Endothelial cell of umbilical vein (primary cell): ENCODE measurements at regions of chr15 and their contacts with region 1.

Region 1: GRCh38 chr15:94700211-94700610 is 468.9 kb downstream of the MCTP2 start:
- DNase-seq: no peak
- H3K4me3 ChIP-seq: no peak overlapping the region
- H3K27ac ChIP-seq: no peak overlapping the region
- H3K4me1 ChIP-seq: peaks cover 44% of the 10 kb centered on the region
- H3K27me3 ChIP-seq: no peaks in the 10 kb centered on the region
- CTCF ChIP-seq: no peak
- POLR2A ChIP-seq: no peak

Region 2: DNA sequence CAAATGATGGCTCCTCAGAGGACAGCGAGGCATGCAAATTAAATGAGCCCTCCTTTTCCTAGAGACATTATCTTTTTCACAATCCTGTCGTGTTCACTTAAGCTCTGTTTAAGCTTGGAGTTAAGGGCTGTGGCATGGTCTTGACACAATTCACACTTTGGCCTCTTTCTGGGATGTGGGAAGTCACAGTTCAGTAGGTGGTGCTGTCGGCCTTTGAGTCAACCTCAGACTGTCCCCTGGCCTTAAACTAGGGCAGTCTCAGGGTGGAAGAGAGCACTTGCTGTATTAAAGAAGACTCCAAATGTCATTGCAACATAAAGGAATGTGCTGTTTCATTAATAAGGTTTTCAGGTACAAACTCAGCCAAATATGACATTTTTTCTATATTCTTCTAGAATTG is 117.8 kb before region 1 on chr15:
- CTCF ChIA-PET with region 1: no interaction called
- POLR2A ChIA-PET with region 1: no interaction called
- dilution Hi-C with region 1: no loop called
- intact Hi-C with region 1: loop called (anchors 1 kb)
- DNase-seq: peak; percentile 85
- H3K4me3 ChIP-seq: no peak overlapping the region
- H3K27ac ChIP-seq: no peak overlapping the region
- H3K4me1 ChIP-seq: peaks cover 25% of the 10 kb centered on the region
- H3K27me3 ChIP-seq: no peaks in the 10 kb centered on the region
- CTCF ChIP-seq: peak; percentile 75 to 80
- POLR2A ChIP-seq: no peak

Region 3: DNA sequence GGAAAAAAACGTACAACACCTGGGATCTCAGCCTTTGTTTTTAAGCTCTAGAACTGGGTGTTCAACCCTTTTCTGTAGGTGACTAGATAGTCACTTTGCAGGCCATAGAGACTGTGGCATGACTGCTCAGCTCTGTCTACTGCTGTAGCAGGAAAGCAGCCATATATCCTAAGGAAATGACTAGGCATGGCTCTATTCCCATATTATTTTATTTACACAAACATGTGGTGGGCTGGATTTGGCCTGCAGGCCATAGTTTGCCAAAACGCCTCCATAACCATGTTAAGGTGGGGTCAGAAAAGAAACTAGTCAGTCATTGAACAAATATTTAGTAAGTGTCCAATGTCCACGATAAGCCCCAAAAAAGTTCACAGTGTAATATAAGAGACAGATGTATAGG is 16.3 kb before region 1 on chr15:
- CTCF ChIA-PET with region 1: interaction called, 6 read pairs
- POLR2A ChIA-PET with region 1: no interaction called
- dilution Hi-C with region 1: no loop called
- intact Hi-C with region 1: loop called (anchors 1 kb)
- DNase-seq: peak; percentile 74
- H3K4me3 ChIP-seq: no peak overlapping the region
- H3K27ac ChIP-seq: peak overlapping the region; percentile 76
- H3K4me1 ChIP-seq: peaks cover 29% of the 10 kb centered on the region
- H3K27me3 ChIP-seq: no peaks in the 10 kb centered on the region
- CTCF ChIP-seq: no peak
- POLR2A ChIP-seq: peak; percentile 46

Region 4: DNA sequence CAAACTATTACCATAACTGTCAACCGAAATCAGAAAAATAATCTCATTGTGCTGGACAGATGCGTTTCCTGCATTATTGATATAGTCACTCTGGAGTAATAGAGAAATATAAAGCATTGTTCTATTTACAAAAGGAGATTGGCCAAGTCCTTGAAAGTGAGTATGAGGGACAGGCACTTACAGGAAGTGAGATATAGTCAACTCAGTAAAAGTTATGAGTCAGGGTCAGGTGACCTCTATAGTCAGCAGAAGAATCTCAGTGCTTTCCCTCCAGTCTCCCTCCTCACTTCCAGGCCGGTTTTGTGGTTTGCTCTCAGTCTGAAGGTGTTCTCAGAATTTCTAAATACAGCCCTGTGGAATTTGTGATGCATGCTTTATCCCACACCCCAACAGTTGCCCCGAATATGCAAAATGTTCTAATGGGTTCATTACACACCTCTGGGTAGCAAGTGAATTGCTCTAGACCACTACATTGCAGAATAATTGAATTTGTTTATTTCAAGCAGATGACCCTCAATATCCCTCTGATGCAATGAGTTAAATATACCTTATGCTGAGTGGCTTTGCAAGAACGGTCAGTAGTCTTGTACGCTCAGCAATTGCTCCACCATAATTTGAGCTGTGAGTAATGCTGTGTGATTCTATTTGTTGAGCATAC is 318.8 kb after region 1 on chr15:
- CTCF ChIA-PET with region 1: interaction called, 3 read pairs
- POLR2A ChIA-PET with region 1: no interaction called
- dilution Hi-C with region 1: no loop called
- intact Hi-C with region 1: loop called (anchors 1 kb)
- DNase-seq: peak; percentile 86
- H3K4me3 ChIP-seq: peak overlapping the region in 1 of 3 experiments; percentile 55
- H3K27ac ChIP-seq: peak overlapping the region; percentile 83
- H3K4me1 ChIP-seq: peaks cover 39% of the 10 kb centered on the region
- H3K27me3 ChIP-seq: no peaks in the 10 kb centered on the region
- CTCF ChIP-seq: no peak
- POLR2A ChIP-seq: no peak

Region 5: GRCh38 chr15:95252404-95252803 is 552.2 kb after region 1 on chr15:
- CTCF ChIA-PET with region 1: no interaction called
- POLR2A ChIA-PET with region 1: no interaction called
- dilution Hi-C with region 1: no loop called
- intact Hi-C with region 1: loop called (anchors 1 kb)
- DNase-seq: peak; percentile 82
- H3K4me3 ChIP-seq: no peak overlapping the region
- H3K27ac ChIP-seq: peak overlapping the region; percentile 59
- H3K4me1 ChIP-seq: peaks cover 32% of the 10 kb centered on the region
- H3K27me3 ChIP-seq: no peaks in the 10 kb centered on the region
- CTCF ChIP-seq: no peak
- POLR2A ChIP-seq: no peak